MCF 10A (cell line): ENCODE measurements at regions of chr6 and their contacts with region 1.

Region 1: GRCh38 chr6:132768051-132768517 is 10.4 kb upstream of the VNN2 start:
- DNase-seq: peak; percentile 67
- H3K4me3 Mint-ChIP-seq: no peak overlapping the region
- H3K27ac Mint-ChIP-seq: no peak overlapping the region
- H3K4me1 Mint-ChIP-seq: peaks cover 21% of the 10 kb centered on the region
- H3K27me3 Mint-ChIP-seq: no peaks in the 10 kb centered on the region
- CTCF ChIP-seq: peak; percentile 45

Region 2: GRCh38 chr6:132530293-132530974 is 237.7 kb before region 1 on chr6:
- CTCF ChIA-PET with region 1: interaction called, 6 read pairs
- POLR2A ChIA-PET with region 1: interaction called, 3 read pairs
- intact Hi-C with region 1: loop called (anchors 1 kb)
- DNase-seq: peak; percentile 78
- H3K4me3 Mint-ChIP-seq: no peak overlapping the region
- H3K27ac Mint-ChIP-seq: no peak overlapping the region
- H3K4me1 Mint-ChIP-seq: no peaks in the 10 kb centered on the region
- H3K27me3 Mint-ChIP-seq: no peaks in the 10 kb centered on the region
- CTCF ChIP-seq: peak; percentile 62

Region 3: DNA sequence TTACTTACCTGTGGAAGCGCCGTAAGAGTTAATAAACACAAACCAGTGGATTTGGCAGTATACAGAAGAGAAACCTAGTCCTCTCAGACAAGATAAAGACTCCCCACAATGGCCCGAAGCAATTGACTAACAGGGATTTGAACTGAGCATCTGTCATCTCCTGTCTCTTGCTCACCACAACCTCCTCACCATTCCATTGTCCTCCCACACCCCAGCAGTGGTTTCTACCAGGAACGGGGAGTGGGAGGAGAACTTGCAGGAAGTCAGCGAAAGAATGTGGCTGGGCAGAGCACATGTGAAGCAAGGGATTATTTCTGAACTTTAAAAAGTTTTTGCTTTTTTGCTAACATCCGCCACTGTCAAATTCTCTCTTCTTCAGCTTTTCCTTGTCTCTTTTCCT is 84.5 kb before region 1 on chr6:
- CTCF ChIA-PET with region 1: interaction called, 5 read pairs
- POLR2A ChIA-PET with region 1: interaction called, 3 read pairs
- intact Hi-C with region 1: loop called (anchors 5 kb)
- DNase-seq: peak; percentile 85
- H3K4me3 Mint-ChIP-seq: peak overlapping the region; percentile 66
- H3K27ac Mint-ChIP-seq: peak overlapping the region; percentile 95
- H3K4me1 Mint-ChIP-seq: peaks cover 28% of the 10 kb centered on the region
- H3K27me3 Mint-ChIP-seq: no peaks in the 10 kb centered on the region
- CTCF ChIP-seq: no peak

Region 4: DNA sequence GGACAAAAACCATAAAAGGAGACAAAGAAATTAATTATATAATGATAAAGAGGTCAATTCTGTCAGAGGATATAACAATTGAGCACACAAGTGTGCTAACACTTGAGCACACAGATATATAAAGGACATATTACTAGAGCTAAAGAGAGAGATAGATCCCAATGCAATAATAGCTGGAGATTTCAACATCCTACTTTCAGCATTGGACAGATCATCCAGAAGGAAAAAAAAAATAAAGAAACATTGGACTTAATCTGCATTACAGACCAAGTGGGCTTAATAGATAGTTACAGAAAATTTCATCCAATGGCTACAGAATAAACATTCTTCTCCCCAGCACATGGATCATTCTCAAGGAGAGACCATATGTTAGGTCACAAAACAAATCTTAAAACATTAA is 64.1 kb before region 1 on chr6:
- CTCF ChIA-PET with region 1: no interaction called
- POLR2A ChIA-PET with region 1: no interaction called
- intact Hi-C with region 1: no loop called
- DNase-seq: no peak
- H3K4me3 Mint-ChIP-seq: no peak overlapping the region
- H3K27ac Mint-ChIP-seq: no peak overlapping the region
- H3K4me1 Mint-ChIP-seq: peaks cover 12% of the 10 kb centered on the region
- H3K27me3 Mint-ChIP-seq: no peaks in the 10 kb centered on the region
- CTCF ChIP-seq: no peak

Region 5: GRCh38 chr6:132734694-132735635 is 33.1 kb before region 1 on chr6:
- CTCF ChIA-PET with region 1: interaction called, 4 read pairs
- POLR2A ChIA-PET with region 1: interaction called, 37 read pairs
- intact Hi-C with region 1: loop called (anchors 1 kb)
- DNase-seq: peak; percentile 94
- H3K4me3 Mint-ChIP-seq: peak overlapping the region; percentile 59
- H3K27ac Mint-ChIP-seq: peak overlapping the region; percentile 86
- H3K4me1 Mint-ChIP-seq: peaks cover 38% of the 10 kb centered on the region
- H3K27me3 Mint-ChIP-seq: no peaks in the 10 kb centered on the region
- CTCF ChIP-seq: peak; percentile 15

Region 6: DNA sequence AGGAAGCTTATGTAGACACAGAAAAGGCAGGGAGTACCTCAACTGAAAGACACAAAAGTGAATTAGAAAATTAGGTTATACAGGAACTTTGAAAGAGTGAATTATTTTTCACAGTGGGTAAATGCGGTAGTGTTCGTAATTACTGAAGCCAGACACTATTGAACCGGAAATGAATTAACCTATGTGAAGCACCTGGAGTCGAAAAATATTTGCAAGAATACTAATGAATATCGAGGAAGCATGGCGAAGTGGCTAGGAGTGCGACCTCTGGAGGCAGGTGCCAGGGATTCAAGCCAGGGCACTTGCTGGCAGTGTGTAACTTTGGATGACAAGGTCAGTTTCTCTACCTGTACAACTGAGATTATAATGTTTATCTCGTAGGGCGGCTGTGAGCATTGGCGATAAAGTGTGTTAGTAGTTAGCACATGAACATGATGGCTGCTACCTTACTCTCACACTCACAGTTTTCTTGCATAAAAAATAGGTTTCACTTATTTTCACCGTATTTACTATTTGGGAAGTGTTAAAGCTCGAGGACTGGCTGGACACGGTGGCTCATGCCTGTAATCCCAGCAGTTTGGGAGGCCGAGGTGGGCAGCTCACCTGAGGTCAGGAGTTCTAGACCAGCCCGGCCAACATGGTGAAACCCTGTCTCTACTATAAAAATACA is 30.9 kb after region 1 on chr6:
- CTCF ChIA-PET with region 1: interaction called, 32 read pairs
- POLR2A ChIA-PET with region 1: interaction called, 12 read pairs
- intact Hi-C with region 1: no loop called
- DNase-seq: peak; percentile 85
- H3K4me3 Mint-ChIP-seq: peak overlapping the region; percentile 94
- H3K27ac Mint-ChIP-seq: no peak overlapping the region
- H3K4me1 Mint-ChIP-seq: peaks cover 11% of the 10 kb centered on the region
- H3K27me3 Mint-ChIP-seq: no peaks in the 10 kb centered on the region
- CTCF ChIP-seq: peak; percentile 64

Region 7: GRCh38 chr6:132820629-132821381 is 52.7 kb after region 1 on chr6:
- CTCF ChIA-PET with region 1: interaction called, 4 read pairs
- POLR2A ChIA-PET with region 1: interaction called, 16 read pairs
- intact Hi-C with region 1: no loop called
- DNase-seq: peak; percentile 46
- H3K4me3 Mint-ChIP-seq: no peak overlapping the region
- H3K27ac Mint-ChIP-seq: peak overlapping the region; percentile 73
- H3K4me1 Mint-ChIP-seq: peaks cover 36% of the 10 kb centered on the region
- H3K27me3 Mint-ChIP-seq: no peaks in the 10 kb centered on the region
- CTCF ChIP-seq: no peak